ENCODE measurements at regions of chr5 and their contacts with region 1.

Region 1: GRCh38 chr5:134041570-134042411 is 37.0 kb upstream of the VDAC1 start:
- DNase-seq: peak in 2 of 10 donors; percentile 29 to 41
- ATAC-seq: peak; percentile 12 to 31
- H3K4me3 Mint-ChIP-seq: peak overlapping the region; percentile 22 to 74 (median 66)
- H3K27ac Mint-ChIP-seq: peak overlapping the region; percentile 78 to 97 (median 86)
- H3K4me1 Mint-ChIP-seq: peaks cover 23 to 70% (median 63%) of the 10 kb centered on the region in 4 donors
- H3K27me3 Mint-ChIP-seq: no peaks in the 10 kb centered on the region

Region 2: GRCh38 chr5:134053840-134054338 is 12.1 kb after region 1 on chr5:
- POLR2A ChIA-PET with region 1: interaction called, 60 read pairs
- DNase-seq: peak in 2 of 10 donors; percentile 41 to 43
- ATAC-seq: peak; percentile 86 to 93
- H3K4me3 Mint-ChIP-seq: peak overlapping the region; percentile 45 to 79 (median 74)
- H3K27ac Mint-ChIP-seq: peak overlapping the region; percentile 76 to 96 (median 91)
- H3K4me1 Mint-ChIP-seq: peaks cover 25 to 57% (median 54%) of the 10 kb centered on the region in 4 donors
- H3K27me3 Mint-ChIP-seq: no peaks in the 10 kb centered on the region

Region 3: DNA sequence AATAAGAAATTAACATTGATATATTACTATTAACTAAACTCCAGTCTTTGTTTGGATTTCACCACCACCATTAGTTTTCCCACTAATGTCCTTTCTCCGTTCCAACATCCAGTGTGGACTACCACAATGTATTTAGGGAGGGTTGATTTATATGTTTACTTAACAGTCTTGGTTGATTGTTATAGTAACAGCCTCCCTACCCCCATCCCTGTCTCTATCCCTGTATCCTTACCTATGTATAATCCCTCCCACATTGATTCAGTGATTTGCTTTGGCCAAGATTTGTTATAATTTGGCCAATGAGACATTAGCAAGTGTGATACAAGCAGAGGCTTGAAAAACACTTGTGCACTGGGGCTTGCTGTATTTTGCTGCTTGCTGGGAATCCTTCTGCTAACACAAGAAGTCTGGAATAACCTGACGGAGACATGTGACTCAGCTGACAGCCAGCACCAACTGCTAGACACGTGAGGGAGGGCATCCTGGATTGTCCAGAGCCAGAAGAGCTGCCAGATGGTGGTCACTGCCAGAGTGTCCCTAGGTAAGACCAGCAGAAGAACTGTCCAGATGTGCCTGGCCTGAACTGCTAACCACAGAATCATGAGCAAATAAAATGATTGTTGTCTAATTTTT is 21.5 kb after region 1 on chr5:
- POLR2A ChIA-PET with region 1: interaction called, 41 read pairs
- DNase-seq: no peak
- ATAC-seq: no peak
- H3K4me3 Mint-ChIP-seq: no peak overlapping the region
- H3K27ac Mint-ChIP-seq: peak overlapping the region in 6 of 10 donors; percentile 2 to 84 (median 40)
- H3K4me1 Mint-ChIP-seq: peaks cover 8 to 27% (median 17%) of the 10 kb centered on the region in 4 donors
- H3K27me3 Mint-ChIP-seq: peaks cover 0 to 2% (median 0%) of the 10 kb centered on the region in 5 donors

Region 4: GRCh38 chr5:134070725-134071613 is 29.2 kb after region 1 on chr5:
- POLR2A ChIA-PET with region 1: interaction called, 41 read pairs
- DNase-seq: peak in 4 of 10 donors; percentile 26 to 63 (median 33)
- ATAC-seq: peak; percentile 46 to 56
- H3K4me3 Mint-ChIP-seq: peak overlapping the region; percentile 74 to 88 (median 79)
- H3K27ac Mint-ChIP-seq: peak overlapping the region; percentile 79 to 90 (median 85)
- H3K4me1 Mint-ChIP-seq: peaks cover 35 to 75% (median 71%) of the 10 kb centered on the region in 4 donors
- H3K27me3 Mint-ChIP-seq: peaks cover 0 to 5% (median 0%) of the 10 kb centered on the region in 5 donors